Pancreas (tissue), 10 donors: ENCODE measurements at regions of chr16 and their contacts with region 1.

Region 1: DNA sequence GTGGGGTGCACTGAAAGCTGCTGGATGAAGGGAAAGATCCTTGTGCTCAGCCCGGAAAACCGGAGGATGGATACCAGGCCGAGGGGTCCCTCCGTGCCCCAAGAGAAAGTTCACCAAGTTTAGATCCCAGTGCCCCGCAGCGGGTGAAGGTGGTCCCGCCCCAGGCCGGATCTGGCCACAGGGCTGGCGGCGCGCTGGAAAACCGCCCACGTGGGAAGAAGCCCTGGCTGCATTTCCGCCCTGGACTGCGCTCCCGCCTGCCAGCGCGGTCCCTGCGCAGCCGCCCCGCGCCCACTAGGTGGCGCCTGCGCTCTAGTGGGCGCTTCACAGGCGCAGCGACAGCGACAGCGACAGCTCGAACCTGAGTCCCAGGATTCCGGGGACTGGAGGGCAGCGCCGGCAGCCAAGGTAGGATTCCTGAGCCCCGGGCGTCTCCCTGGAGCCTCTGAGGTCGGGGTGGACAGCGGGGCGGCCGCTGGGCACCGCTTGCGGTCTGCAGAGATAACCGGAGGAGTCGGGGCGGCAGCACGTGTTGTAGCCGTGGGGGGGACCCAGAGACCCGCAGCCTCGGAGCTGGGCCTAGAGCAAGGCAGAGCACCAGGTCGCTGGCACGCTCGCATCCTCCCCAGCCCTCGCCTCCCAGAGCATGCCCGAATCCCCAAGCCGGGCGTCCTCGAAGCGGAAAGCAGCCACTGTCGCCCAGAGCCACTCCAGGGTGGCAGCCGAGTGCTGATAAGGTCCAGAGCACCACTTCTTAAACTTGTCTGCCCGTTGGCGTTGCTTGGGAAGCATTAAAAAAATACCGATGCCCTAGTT is at the start of gene CHD9:
- DNase-seq: peak; percentile 76 to 95 (median 90)
- ATAC-seq: peak; percentile 95 to 98 (median 96)
- H3K4me3 ChIP-seq: peak within 1 kb of the TSS; percentile 60 to 76 (median 66)
- H3K27ac ChIP-seq: peak within 1 kb of the TSS; percentile 61 to 81 (median 70)
- H3K4me1 ChIP-seq: peaks cover 0 to 11% (median 0%) of the 10 kb centered on the region in 3 donors
- H3K27me3 ChIP-seq: no peaks in the 10 kb centered on the region
- CTCF ChIP-seq: peak; percentile 99 to 100 (median 100)
- total RNA-seq, gene CHD9: 23.5 to 40.9 (median 30.8) TPM

Region 2: DNA sequence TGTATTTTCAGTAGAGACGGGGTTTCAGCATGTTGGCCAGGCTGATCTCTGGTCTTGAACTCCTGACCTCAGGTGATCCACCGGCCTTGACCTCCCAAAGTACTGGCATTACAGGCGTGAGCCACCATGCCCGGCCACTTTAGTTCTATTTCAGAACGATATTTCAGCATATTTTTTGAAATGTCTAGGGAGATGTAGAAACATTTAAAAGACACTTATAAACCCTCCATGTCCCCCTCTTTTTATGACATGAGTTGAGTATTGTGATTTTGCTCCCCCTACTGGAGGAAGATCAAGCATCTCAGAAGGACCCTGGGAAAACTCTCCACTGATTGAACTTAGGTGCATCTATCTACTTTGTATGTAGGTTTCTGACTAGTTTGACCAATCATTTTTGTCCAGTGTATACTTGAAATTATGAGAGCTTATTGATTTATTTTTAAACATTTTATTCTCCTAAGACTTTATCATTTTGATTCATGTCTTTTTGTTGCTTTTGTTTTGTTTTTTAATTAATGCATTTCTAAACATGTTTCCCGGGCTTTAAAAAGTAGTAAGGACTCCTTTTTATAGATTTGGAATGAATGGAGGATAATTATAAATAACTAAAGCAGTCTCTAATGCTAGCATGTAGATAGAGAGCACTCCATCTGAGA is 105.0 kb after region 1 on chr16:
- intact Hi-C with region 1: loop called in 1 of 3 experiments (anchors 10 kb)
- DNase-seq: no peak
- ATAC-seq: peak; percentile 31 to 85 (median 76)
- H3K4me3 ChIP-seq: no peak overlapping the region
- H3K27ac ChIP-seq: no peak overlapping the region
- H3K4me1 ChIP-seq: no peaks in the 10 kb centered on the region
- H3K27me3 ChIP-seq: no peaks in the 10 kb centered on the region
- CTCF ChIP-seq: peak; percentile 27 to 63 (median 36)

Region 3: GRCh38 chr16:53282975-53283946 is 228.4 kb after region 1 on chr16:
- intact Hi-C with region 1: loop called in 2 of 3 experiments (anchors 10 kb)
- DNase-seq: no peak
- ATAC-seq: peak; percentile 46 to 86 (median 80)
- H3K4me3 ChIP-seq: no peak overlapping the region
- H3K27ac ChIP-seq: no peak overlapping the region
- H3K4me1 ChIP-seq: no peaks in the 10 kb centered on the region
- H3K27me3 ChIP-seq: no peaks in the 10 kb centered on the region
- CTCF ChIP-seq: peak in 3 of 4 donors; percentile 23 to 30 (median 27)